HEK293T (cell line): ENCODE measurements at regions of chr16 and their contacts with region 1.

Region 1: DNA sequence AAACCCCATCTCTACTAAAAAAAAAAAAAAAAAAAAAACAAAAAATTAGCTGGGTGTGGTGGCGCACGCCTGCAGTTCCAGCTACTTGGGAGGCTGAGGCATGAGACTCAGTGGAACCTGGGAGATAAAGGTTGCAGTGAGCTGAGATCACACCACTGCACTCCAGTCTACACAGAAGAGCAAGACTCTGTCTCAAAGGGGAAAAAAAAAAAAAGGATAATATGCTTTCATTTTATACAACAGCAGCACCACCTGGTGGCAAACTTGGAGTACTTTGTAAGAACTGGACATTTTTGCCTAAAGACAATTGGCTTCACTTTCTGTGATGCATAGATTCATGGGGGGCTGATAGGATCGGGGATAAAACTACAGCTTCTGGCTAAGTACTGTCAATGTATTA is 8.5 kb downstream of the CHTF8 start:
- DNase-seq: peak; percentile 58

Region 2: DNA sequence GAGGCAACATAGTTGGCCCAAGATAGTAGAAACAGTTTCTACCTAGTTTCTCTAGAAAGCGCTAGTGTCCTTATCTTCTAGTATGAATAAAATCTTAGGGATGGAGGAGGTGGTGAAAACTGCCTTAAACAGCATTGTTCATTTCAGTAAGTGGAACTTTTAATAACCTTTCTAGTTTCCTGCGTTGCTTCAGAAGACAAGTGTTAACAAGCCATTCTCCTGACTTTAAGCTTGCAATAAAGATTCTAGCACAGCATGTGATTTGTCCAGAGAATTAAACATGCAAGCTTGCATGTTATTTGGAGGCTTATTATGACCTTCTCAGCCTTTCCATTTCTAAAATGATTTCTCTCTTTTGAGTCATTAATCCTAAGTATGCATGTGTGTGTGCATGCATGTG is 208.3 kb before region 1 on chr16:
- CTCF ChIA-PET with region 1: no interaction called
- POLR2A ChIA-PET with region 1: no interaction called
- DNase-seq: no peak

Region 3: DNA sequence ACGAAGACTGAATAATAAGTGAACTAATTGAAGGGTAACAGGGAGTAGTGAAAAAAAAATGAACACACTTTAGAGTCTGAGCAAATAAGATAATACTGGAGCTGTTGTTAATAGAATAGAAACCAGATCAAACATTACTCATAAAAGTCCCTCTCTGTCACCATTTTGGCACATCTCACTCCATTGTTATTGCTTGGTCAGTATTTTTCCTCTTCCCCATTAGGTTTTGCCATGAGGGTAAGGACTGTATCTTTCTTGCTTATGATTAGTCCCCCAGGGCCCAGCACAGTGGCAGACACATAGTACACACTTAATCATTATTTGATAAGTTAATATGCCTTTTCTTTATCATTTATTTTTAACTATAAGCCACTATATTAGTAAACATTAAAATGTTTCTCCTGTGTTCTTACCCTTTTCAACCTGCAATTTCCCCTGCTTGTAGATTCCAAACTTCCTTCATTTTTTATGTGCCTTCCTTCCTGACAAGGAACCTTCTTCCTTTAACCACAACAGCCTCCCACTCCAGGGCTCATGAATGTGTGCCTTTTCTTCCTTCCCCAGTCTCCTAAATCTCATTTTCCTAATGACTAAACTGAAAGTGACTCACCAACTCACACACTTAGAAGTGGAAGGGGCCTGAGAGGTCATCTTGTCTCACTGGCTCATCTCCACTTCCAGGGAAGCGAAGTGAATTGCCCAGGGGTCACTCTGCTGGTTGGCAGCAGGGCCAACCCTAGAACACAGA is 106.7 kb before region 1 on chr16:
- CTCF ChIA-PET with region 1: no interaction called
- POLR2A ChIA-PET with region 1: no interaction called
- DNase-seq: no peak

Region 4: GRCh38 chr16:69031877-69032301 is 92.0 kb before region 1 on chr16:
- CTCF ChIA-PET with region 1: no interaction called
- POLR2A ChIA-PET with region 1: no interaction called
- DNase-seq: no peak

Region 5: DNA sequence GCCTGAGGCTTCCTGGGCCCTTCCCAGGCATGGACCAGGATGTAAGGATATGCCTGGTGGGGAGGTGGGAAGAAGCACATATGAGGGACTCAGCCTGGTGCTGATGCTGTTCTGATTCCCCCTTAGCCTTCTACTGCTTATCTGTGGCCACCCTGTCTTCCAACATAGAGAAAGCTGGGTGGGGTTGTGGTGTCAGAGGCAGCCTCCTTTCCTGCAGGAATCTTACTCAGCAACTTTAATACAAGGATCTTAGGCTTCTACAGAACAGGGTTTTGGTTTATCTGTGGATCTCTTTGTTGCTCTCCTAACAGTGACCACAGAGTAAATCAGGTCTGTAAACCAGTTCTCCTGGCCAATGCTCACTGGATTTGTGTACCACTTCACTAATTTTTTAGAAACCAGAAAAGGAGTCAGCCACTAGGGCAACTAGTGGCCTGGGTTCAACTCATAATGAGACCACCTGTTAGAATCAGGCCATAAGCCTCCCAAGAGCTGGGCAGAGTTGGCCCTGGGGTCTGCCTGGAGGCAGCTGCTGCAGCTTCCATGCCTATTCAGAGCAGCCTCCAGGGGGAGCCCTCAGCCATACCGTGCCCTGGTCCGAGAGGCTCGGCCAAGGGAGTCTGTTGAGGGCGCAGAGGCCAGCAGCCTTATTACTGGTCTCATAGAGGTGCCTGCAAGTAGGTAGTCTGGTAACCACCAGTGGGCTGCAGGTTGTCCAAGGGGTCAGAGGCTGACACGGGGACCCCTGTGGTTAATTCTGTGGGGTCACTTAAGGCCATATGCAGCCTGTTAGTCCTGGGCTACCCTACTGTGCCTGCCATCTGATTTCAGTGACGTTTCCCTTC is 11.4 kb before region 1 on chr16:
- CTCF ChIA-PET with region 1: interaction called, 26 read pairs
- POLR2A ChIA-PET with region 1: interaction called, 4 read pairs
- DNase-seq: peak; percentile 84

Region 6: GRCh38 chr16:69217433-69217832 is 93.5 kb after region 1 on chr16:
- CTCF ChIA-PET with region 1: no interaction called
- POLR2A ChIA-PET with region 1: no interaction called
- DNase-seq: no peak